MCF 10A (cell line): ENCODE measurements at regions of chr9 and their contacts with region 1.

Region 1: GRCh38 chr9:113737517-113738271 is 138.4 kb upstream of the ZNF618 start:
- DNase-seq: peak; percentile 75
- H3K4me3 Mint-ChIP-seq: no peak overlapping the region
- H3K27ac Mint-ChIP-seq: no peak overlapping the region
- H3K4me1 Mint-ChIP-seq: peaks cover 6% of the 10 kb centered on the region
- H3K27me3 Mint-ChIP-seq: peaks cover 3% of the 10 kb centered on the region
- CTCF ChIP-seq: peak; percentile 72

Region 2: DNA sequence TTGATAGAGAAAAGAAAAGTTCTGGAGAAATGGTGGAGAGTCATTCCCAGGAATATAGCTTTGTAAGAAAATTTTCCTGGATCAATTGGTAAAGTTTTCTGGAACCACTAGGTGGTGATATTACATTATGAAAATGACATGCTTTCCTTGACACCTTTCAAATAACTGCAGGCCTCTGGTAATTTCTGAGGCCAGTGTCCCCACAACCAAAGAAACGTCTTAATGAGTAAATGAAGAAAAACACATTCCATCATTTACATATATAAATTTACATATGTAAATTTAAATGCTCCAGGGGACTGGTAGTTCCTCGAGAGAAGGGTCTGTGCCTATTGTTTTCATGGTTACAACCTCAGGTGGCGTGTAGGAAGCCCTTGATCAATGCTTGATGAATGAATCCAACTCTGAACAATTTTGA is 291.4 kb before region 1 on chr9:
- CTCF ChIA-PET with region 1: no interaction called
- POLR2A ChIA-PET with region 1: no interaction called
- intact Hi-C with region 1: no loop called
- DNase-seq: peak; percentile 51
- H3K4me3 Mint-ChIP-seq: no peak overlapping the region
- H3K27ac Mint-ChIP-seq: no peak overlapping the region
- H3K4me1 Mint-ChIP-seq: no peaks in the 10 kb centered on the region
- H3K27me3 Mint-ChIP-seq: no peaks in the 10 kb centered on the region
- CTCF ChIP-seq: peak; percentile 66

Region 3: GRCh38 chr9:113807173-113808061 is 69.7 kb after region 1 on chr9:
- CTCF ChIA-PET with region 1: interaction called, 3 read pairs
- POLR2A ChIA-PET with region 1: no interaction called
- intact Hi-C with region 1: loop called (anchors 5 kb)
- DNase-seq: peak; percentile 66
- H3K4me3 Mint-ChIP-seq: peak overlapping the region; percentile 35
- H3K27ac Mint-ChIP-seq: no peak overlapping the region
- H3K4me1 Mint-ChIP-seq: peaks cover 23% of the 10 kb centered on the region
- H3K27me3 Mint-ChIP-seq: peaks cover 3% of the 10 kb centered on the region
- CTCF ChIP-seq: peak; percentile 90

Region 4: GRCh38 chr9:113876151-113876992 is 138.7 kb after region 1 on chr9 and contains the start of gene ZNF618:
- CTCF ChIA-PET with region 1: interaction called, 3 read pairs
- POLR2A ChIA-PET with region 1: no interaction called
- intact Hi-C with region 1: loop called (anchors 1 kb)
- DNase-seq: peak; percentile 32
- H3K4me3 Mint-ChIP-seq: peak within 1 kb of the TSS; percentile 85
- H3K27ac Mint-ChIP-seq: peak within 1 kb of the TSS; percentile 81
- H3K4me1 Mint-ChIP-seq: peaks cover 12% of the 10 kb centered on the region
- H3K27me3 Mint-ChIP-seq: no peaks in the 10 kb centered on the region
- CTCF ChIP-seq: peak; percentile 9
- total RNA-seq, gene ZNF618: 4.8 and 6.6 TPM in 2 replicates

Region 5: DNA sequence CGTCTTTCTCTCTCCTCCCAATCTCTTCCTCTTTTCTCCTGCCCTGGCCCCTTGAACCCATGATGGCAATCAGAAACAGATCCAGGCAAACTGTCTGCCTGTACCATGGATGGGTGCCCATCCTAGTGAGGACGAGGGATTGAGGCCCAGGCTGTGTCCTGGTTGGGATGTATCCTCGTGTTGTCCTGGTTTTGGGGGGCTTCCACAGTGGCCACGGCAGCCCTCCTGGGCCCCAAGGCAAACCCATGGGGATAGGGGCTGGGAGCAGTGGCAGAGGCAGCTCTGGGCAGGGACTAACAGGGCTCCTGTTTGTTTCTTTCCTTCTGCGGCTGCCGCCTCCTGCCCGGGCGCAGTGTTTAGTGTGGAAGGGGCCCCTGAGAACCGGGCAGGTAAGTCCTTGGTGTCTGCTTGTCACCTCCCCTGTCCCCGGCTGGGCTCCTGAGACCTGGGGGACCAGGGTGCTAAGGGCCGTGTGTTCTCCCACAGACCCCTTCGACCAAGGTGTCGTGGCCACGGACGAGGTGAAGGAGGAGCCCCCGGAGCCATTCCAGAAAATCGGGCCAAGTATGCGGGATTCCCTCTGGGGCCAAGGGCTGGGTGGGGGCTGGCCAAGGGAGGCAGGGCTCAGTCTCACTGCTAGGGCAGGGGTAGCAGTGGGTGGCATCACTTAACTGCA is 270.4 kb after region 1 on chr9:
- CTCF ChIA-PET with region 1: no interaction called
- POLR2A ChIA-PET with region 1: no interaction called
- intact Hi-C with region 1: no loop called
- DNase-seq: no peak
- H3K4me3 Mint-ChIP-seq: no peak overlapping the region
- H3K27ac Mint-ChIP-seq: no peak overlapping the region
- H3K4me1 Mint-ChIP-seq: no peaks in the 10 kb centered on the region
- H3K27me3 Mint-ChIP-seq: no peaks in the 10 kb centered on the region
- CTCF ChIP-seq: no peak

Region 6: GRCh38 chr9:114033397-114034103 is 295.9 kb after region 1 on chr9:
- CTCF ChIA-PET with region 1: interaction called, 3 read pairs
- POLR2A ChIA-PET with region 1: no interaction called
- intact Hi-C with region 1: loop called (anchors 1 kb)
- DNase-seq: peak; percentile 8
- H3K4me3 Mint-ChIP-seq: no peak overlapping the region
- H3K27ac Mint-ChIP-seq: no peak overlapping the region
- H3K4me1 Mint-ChIP-seq: no peaks in the 10 kb centered on the region
- H3K27me3 Mint-ChIP-seq: no peaks in the 10 kb centered on the region
- CTCF ChIP-seq: peak; percentile 33